ENCODE measurements at regions of chr20 and their contacts with region 1.

Region 1: GRCh38 chr20:50790651-50791277 is 4.1 kb upstream of the BCAS4 start:
- DNase-seq: peak; percentile 69 to 90 (median 82)
- H3K4me3 ChIP-seq: peak overlapping the region in 51 of 59 donors; percentile 5 to 62 (median 41)
- H3K27ac ChIP-seq: peak overlapping the region; percentile 17 to 96 (median 83)
- H3K27me3 ChIP-seq: no peaks in the 10 kb centered on the region
- CTCF ChIP-seq: peak; percentile 45 to 90 (median 79)

Region 2: DNA sequence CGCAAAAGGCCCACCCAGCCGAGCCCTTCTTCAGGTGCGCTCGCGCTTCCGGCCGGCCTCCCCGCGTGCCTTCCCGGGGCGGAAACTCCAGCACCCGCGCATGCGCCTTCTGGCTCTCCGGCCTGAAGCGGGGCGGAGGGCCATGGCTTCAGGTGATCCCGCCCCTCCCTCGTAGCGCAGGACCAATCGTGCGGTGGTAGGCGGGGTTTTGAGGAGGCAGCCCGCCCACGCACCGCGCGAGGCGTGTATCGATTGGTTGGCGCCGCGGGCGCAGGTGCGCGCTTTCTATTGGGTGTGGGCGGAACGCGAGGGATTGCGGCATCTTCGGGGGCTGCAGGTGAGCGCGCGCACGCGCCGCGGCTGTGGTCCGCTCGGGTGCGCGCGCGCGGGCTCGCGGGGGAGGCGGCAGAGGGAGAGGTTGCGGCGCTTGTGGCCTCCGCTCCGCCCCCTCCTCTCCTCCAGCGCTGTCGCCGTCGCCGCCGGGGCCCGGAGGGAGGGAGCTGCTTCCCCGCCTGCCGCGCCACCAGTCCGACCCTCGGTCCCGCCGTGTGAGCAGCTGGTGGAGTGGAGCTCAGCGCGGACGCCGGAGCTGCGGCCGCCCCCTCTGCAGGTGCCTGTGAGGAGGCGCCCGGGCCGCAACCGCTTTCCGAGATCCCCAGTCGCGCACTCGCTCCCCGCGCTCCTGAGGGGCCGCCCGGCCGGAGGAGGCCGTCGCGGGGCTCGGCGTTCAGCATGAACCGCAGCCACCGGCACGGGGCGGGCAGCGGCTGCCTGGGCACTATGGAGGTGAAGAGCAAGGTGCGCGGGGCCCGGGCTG is 59.5 kb before region 1 on chr20 and contains the start of gene PARD6B:
- intact Hi-C with region 1: loop called in 1 of 2 experiments (anchors 5 kb)
- DNase-seq: peak; percentile 93 to 99 (median 97)
- H3K4me3 ChIP-seq: peak within 1 kb of the TSS; percentile 47 to 97 (median 88)
- H3K27ac ChIP-seq: peak within 1 kb of the TSS in 55 of 59 donors; percentile 20 to 86 (median 72)
- H3K27me3 ChIP-seq: no peaks in the 10 kb centered on the region
- CTCF ChIP-seq: peak in 19 of 56 donors; percentile 5 to 50 (median 17)
- total RNA-seq, gene PARD6B: 2.6 to 11.1 (median 5.6) TPM

Region 3: GRCh38 chr20:50762435-50763201 is 28.1 kb before region 1 on chr20:
- intact Hi-C with region 1: loop called in 1 of 2 experiments (anchors 2 kb)
- DNase-seq: peak; percentile 37 to 82 (median 66)
- H3K4me3 ChIP-seq: peak overlapping the region in 1 of 59 donors; percentile 2
- H3K27ac ChIP-seq: no peak overlapping the region
- H3K27me3 ChIP-seq: no peaks in the 10 kb centered on the region
- CTCF ChIP-seq: peak in 7 of 56 donors; percentile 6 to 24 (median 9)

Region 4: DNA sequence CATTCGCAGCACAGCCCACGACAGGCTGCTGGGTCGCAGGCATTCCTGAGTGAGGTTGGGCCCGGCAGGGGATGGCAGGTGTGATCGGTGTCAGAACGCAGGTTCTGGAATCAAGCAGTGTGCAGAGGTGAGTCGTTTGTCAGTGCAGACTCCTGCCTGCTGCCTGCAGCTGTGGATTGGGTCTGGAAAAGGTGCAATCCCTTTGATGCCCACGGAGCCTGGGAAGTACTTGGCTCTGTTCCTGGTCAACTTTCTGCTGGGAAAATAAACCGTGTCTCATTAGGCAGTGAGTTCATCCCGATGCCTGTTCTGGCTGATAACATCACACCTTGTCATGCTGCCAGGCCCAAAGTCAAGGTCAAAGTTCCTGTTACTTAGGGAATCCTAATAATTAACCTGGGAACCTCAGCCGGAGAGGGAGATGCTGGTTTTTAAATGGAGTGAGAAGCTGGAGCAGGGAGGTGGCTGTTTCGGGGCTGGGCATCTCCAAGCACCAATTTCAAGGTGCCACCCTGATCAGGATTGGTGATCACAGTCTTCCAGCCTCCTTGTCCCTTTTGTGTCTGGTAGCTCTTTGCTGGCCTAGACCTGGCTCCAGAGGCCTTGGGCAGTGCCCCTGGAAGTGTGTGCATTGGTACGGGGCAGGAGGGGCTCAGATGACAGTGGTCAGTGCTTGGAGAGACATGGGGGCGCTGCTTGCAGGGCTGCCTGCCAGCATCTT is 65.4 kb after region 1 on chr20:
- intact Hi-C with region 1: no loop called
- DNase-seq: no peak
- H3K4me3 ChIP-seq: no peak overlapping the region
- H3K27ac ChIP-seq: no peak overlapping the region
- H3K27me3 ChIP-seq: no peaks in the 10 kb centered on the region
- CTCF ChIP-seq: no peak

Region 5: GRCh38 chr20:50929299-50930138 is 138.8 kb after region 1 on chr20:
- intact Hi-C with region 1: loop called (anchors 1 kb)
- DNase-seq: peak; percentile 73 to 98 (median 89)
- H3K4me3 ChIP-seq: peak overlapping the region; percentile 51 to 93 (median 79)
- H3K27ac ChIP-seq: peak overlapping the region in 58 of 59 donors; percentile 25 to 100 (median 84)
- H3K27me3 ChIP-seq: no peaks in the 10 kb centered on the region
- CTCF ChIP-seq: peak; percentile 66 to 98 (median 93)

Measured in dorsolateral prefrontal cortex (tissue), 120 donors.